Activated CD4-positive, alpha-beta T cell treated with anti-CD3 and anti-CD28 coated beads for 36 hours (primary cell): ENCODE measurements at regions of chr2 and their contacts with region 1.

Region 1: GRCh38 chr2:12716282-12717190 is at the start of gene TRIB2:
- DNase-seq: peak; percentile 90
- ATAC-seq: peak; percentile 74
- H3K4me3 Mint-ChIP-seq: peak within 1 kb of the TSS; percentile 92
- H3K27ac Mint-ChIP-seq: peak within 1 kb of the TSS; percentile 95
- H3K4me1 Mint-ChIP-seq: peaks cover 48% of the 10 kb centered on the region
- H3K27me3 Mint-ChIP-seq: no peaks in the 10 kb centered on the region
- total RNA-seq, gene TRIB2: 2.7 to 3.7 TPM

Region 2: DNA sequence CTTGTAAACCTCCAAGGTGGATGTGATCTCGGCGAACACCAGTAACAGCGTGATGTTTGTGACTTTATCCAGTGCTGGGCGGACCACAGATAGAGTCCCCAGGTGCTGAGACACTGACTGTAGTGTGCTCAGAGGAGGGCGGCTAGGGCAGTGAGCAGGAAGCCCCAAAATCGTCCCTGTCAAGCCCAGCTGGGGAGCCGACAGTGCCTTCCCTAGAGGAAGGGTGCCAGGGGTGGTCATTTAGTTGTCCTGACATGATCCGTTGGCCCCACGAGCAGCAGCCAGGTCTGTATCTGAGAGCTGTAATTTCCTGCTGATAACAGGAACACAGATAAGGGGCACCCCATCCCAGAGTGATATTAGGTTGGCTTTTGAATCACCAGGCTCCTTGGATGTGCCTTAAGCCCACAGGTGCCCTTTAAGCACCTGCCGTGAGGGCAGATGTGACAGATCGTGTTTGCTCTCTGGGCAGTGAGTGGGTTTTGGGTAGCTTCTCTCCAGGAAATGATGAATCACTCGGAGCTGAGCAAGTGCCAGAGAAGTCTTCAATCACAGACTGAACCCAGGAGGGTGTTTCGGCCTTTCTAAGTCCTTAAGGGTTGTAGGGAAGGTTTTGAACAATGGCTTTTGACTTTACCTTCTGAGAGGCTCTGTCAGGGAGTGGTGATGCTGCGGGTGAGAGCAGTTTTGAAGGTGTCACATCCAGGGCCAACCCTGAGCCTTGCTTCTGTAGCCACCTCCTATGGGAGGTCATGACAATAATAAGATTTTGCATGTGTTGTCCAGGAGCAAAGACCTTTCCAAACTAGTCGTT is 962.4 kb before region 1 on chr2:
- CTCF ChIA-PET with region 1: no interaction called
- POLR2A ChIA-PET with region 1: no interaction called
- intact Hi-C with region 1: loop called in 1 of 2 experiments (anchors 2 kb)
- DNase-seq: peak; percentile 84
- ATAC-seq: peak; percentile 75
- H3K4me3 Mint-ChIP-seq: peak overlapping the region; percentile 75
- H3K27ac Mint-ChIP-seq: peak overlapping the region; percentile 98
- H3K4me1 Mint-ChIP-seq: peaks cover 91% of the 10 kb centered on the region
- H3K27me3 Mint-ChIP-seq: no peaks in the 10 kb centered on the region

Region 3: DNA sequence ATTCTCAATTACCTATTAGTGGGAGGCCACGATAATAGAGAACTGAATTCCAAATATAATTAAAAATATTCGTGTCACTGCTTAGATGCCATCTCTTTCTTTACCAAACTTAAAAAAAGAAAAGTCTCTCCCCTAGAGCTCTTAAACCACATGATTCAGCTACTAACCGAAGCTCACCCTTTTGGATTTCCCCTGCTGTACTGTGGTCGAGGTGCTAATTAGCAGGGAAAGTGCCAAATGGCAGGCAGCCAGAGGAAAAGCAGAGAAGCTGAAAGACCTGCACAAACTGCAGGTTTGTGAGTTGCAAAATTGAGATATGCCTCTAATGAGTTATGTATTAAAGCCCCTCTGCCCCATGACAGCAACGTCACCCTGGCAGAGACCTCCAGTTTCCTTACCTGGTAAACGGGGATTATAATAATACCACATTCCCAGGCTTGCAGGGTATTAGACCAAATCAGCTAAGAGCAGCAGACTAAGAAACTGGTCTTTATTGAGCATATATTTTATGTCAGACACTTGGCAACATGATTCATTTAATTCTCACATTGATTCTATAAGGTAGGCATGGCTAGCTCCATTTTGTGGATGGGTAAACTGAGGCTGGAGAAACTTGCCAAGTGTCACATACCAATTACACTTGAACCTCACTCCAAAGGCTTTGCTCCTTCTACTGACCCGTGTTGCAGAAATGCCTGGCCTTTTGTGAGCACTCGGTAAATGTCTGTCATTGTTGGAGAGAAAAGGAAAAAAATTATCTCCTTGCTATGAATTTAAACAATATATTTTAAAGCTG is 710.5 kb before region 1 on chr2:
- CTCF ChIA-PET with region 1: interaction called, 3 read pairs
- POLR2A ChIA-PET with region 1: no interaction called
- intact Hi-C with region 1: loop called (anchors 5 kb)
- DNase-seq: peak; percentile 85
- ATAC-seq: peak; percentile 94
- H3K4me3 Mint-ChIP-seq: no peak overlapping the region
- H3K27ac Mint-ChIP-seq: no peak overlapping the region
- H3K4me1 Mint-ChIP-seq: peaks cover 16% of the 10 kb centered on the region
- H3K27me3 Mint-ChIP-seq: peaks cover 59% of the 10 kb centered on the region

Region 4: DNA sequence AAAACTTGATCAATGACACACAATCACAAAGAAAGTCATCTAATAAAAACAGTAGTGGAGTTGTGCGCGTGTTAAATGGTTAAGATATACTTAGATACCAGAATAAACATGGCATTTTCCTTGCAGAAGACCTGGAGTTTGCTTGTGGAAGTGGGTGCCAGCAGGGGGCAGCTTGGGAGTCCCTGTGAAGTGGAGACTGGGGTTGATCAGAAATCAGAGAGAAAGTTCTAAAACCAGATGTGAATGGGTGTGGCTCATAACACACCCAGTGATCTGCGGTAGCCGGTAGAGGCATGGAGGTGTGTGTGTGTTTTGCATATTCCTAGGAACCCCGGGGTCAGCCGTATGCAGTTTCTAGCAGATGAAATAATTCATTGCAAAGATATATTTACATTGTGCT is 299.9 kb before region 1 on chr2:
- CTCF ChIA-PET with region 1: interaction called, 4 read pairs
- POLR2A ChIA-PET with region 1: no interaction called
- intact Hi-C with region 1: loop called (anchors 1 kb)
- DNase-seq: peak; percentile 69
- ATAC-seq: peak; percentile 43
- H3K4me3 Mint-ChIP-seq: no peak overlapping the region
- H3K27ac Mint-ChIP-seq: no peak overlapping the region
- H3K4me1 Mint-ChIP-seq: peaks cover 36% of the 10 kb centered on the region
- H3K27me3 Mint-ChIP-seq: no peaks in the 10 kb centered on the region

Region 5: GRCh38 chr2:12501469-12502158 is 214.9 kb before region 1 on chr2:
- CTCF ChIA-PET with region 1: no interaction called
- POLR2A ChIA-PET with region 1: no interaction called
- intact Hi-C with region 1: loop called (anchors 2 to 5 kb)
- DNase-seq: peak; percentile 87
- ATAC-seq: peak; percentile 77
- H3K4me3 Mint-ChIP-seq: no peak overlapping the region
- H3K27ac Mint-ChIP-seq: peak overlapping the region; percentile 62
- H3K4me1 Mint-ChIP-seq: peaks cover 94% of the 10 kb centered on the region
- H3K27me3 Mint-ChIP-seq: no peaks in the 10 kb centered on the region

Region 6: DNA sequence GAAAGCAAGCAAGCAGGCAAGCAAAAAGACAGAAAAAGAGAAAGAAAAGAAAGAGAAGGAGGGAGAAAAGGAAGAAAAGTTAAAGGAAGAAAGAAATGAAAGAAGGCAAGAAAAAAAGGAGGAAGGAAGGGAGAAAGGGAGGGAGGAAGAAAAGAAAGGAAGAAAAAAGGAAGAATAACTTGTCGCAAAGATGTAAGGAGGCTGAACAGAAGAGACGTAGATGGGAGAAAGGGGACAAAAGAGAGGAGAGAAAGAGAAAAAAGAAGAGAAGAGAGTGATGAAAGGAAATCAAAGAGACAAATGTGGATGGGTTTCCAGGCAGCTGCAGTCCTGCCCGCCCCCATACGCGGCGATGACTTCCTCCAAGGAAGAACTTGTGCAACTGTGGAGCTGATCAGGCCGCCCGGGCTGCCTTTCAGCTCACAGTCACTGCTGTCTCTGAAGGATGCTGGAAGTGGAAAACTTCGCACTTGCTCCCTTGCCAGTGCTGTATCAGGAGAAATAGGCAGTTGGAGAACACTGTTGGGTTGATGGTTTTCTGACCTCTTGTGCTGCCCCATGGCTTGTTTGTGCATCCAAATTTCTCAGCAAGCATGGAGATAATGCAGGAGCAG is 53.1 kb after region 1 on chr2:
- CTCF ChIA-PET with region 1: no interaction called
- POLR2A ChIA-PET with region 1: no interaction called
- intact Hi-C with region 1: no loop called
- DNase-seq: no peak
- ATAC-seq: no peak
- H3K4me3 Mint-ChIP-seq: no peak overlapping the region
- H3K27ac Mint-ChIP-seq: no peak overlapping the region
- H3K4me1 Mint-ChIP-seq: peaks cover 2% of the 10 kb centered on the region
- H3K27me3 Mint-ChIP-seq: peaks cover 8% of the 10 kb centered on the region

Region 7: DNA sequence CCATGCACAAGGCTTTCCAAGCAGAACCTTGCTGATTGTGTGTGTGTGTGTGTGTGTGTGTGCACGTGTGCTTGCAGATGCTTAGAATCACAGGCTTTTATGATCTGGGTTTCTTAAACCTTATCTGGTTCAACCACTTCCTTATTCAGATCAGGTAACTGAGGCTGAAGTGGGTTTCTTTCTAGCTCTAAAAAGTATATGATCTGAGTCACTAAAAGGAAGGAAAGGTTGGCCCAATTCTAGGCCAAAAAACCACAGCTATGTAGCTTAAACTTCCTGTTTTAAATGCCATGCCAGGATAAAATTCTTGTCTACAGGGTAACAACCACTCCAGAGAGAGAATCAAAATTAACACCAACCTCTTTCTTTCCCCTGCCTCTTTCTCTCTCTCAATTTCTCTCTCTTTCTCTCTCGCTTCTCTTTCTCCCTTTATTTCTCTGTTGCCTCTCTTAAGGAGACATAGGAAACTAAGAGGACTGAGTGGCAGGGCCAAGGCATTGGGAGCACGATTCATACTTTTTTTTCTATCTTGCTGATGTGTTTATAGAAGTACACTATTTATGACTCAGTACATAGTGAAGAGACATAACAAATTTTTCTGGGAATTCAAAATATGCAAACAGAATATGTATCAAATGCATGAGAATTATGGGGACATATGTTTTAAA is 140.5 kb after region 1 on chr2:
- CTCF ChIA-PET with region 1: no interaction called
- POLR2A ChIA-PET with region 1: no interaction called
- intact Hi-C with region 1: loop called (anchors 5 kb)
- DNase-seq: no peak
- ATAC-seq: peak; percentile 80
- H3K4me3 Mint-ChIP-seq: no peak overlapping the region
- H3K27ac Mint-ChIP-seq: peak overlapping the region; percentile 7
- H3K4me1 Mint-ChIP-seq: peaks cover 18% of the 10 kb centered on the region
- H3K27me3 Mint-ChIP-seq: peaks cover 10% of the 10 kb centered on the region

Region 8: GRCh38 chr2:13504808-13505207 is 788.3 kb after region 1 on chr2:
- CTCF ChIA-PET with region 1: no interaction called
- POLR2A ChIA-PET with region 1: no interaction called
- intact Hi-C with region 1: no loop called
- DNase-seq: no peak
- ATAC-seq: no peak
- H3K4me3 Mint-ChIP-seq: no peak overlapping the region
- H3K27ac Mint-ChIP-seq: no peak overlapping the region
- H3K4me1 Mint-ChIP-seq: no peaks in the 10 kb centered on the region
- H3K27me3 Mint-ChIP-seq: no peaks in the 10 kb centered on the region